ENCODE measurements at regions of chr9 and their contacts with region 1.

Region 1: DNA sequence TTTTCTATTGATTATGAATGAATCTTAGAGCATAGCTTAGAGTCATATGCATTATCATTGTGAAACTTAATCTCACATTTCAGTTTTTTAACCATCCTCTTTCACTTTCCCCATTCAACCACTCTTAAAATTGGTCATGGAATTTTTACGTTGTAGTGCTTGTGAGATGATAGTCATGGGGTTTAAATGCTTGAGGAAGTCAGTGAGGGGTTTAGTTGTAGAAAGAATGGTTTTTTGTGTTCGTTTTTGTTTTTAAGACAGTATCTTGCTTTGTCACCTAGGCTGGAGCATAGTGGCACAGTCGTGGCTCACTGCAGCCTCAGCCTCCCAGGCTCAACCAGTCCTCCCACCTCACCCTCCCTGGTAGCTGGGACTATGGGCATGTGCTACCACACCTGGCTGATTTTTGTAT is 19.6 kb downstream of the UGCG start:
- DNase-seq: peak; percentile 62
- CTCF ChIP-seq: no peak

Region 2: DNA sequence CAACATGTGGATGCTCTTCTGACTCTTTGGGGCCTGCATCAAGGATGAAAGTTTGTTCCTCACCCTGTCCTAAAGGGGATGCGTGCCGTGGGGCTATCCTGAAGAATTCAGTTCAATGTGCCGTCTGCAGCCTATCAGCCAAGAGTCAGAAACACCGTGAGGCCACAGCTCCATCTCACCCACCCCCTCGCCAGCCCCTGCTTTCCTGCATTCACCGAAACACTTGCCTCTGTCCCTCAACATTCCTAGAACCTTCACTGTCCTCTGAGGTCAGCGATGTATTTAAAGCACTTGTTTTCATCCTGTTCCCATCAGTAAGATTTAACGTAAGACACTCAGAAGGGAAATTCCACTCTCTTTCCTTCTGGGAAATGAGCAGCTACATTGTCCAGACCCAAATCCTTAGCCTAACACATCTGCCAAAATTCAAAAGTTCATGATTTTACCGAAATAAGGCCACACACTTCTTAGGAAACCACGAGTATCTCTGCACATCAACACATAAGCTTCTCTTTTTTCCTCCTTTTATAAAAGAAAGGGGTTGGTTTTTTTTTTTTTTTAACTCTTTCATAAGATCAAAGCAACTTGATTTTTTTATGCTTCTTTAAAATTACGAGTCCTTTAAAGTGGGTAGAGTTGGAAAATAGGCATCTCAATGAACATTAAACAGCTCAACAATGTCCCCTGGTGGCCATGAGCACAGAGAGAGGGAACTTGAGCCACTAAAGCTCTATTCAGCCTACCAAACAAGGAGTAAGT is 158.2 kb after region 1 on chr9:
- in situ Hi-C with region 1: loop called (anchors 10 kb)
- DNase-seq: peak; percentile 40
- CTCF ChIP-seq: peak; percentile 70

Region 3: DNA sequence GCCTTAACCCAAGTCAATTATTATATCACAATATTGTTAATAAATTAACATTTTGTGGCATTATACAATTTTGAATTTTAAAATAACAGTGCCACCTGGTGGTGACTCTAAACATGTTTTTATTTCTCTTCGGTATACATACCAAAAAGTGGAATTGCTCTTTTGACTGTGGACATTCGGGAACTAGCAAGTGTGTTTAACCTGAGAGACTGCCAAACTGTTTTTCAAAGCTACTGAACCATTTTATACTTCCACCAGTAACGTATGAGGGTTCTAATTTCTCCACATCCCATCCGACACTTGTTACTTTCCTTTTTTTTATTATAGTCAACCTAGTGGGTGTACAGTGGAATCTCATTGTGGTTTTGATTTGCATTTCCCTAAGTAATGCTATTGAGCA is 445.4 kb after region 1 on chr9:
- in situ Hi-C with region 1: loop called (anchors 25 kb)
- DNase-seq: peak; percentile 34
- CTCF ChIP-seq: no peak